GM10248 (cell line): ENCODE measurements at regions of chr10 and their contacts with region 1.

Region 1: DNA sequence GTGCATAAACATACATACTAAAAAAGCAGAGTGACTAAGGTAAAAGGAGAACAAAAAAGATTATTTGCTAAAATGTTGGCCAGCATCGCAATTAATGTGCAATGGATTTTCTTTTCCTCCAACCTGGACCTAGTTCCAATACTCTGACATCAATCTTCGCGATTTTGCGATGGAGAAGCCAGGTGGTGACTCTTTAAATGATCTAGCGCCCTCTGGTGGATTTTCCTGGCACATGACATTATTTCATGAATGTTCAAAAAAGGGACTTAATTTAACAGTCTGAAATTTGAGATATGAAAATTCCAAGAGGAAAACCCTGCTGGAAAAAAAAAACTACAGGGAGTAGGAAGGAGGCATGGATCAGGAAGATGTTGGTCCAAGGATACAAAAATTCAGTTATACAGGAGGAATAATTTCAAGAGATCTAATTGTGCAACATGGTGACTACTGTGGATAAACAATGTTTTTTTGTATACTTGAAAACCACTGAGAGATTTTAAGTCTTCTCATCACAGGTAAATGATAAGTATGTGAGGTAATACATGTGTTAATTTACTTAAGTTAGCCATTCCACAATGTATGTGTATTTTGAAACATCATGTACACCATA is 4.3 kb upstream of the KCNMA1 start:
- DNase-seq: peak; percentile 62
- CTCF ChIP-seq: peak; percentile 66

Region 2: DNA sequence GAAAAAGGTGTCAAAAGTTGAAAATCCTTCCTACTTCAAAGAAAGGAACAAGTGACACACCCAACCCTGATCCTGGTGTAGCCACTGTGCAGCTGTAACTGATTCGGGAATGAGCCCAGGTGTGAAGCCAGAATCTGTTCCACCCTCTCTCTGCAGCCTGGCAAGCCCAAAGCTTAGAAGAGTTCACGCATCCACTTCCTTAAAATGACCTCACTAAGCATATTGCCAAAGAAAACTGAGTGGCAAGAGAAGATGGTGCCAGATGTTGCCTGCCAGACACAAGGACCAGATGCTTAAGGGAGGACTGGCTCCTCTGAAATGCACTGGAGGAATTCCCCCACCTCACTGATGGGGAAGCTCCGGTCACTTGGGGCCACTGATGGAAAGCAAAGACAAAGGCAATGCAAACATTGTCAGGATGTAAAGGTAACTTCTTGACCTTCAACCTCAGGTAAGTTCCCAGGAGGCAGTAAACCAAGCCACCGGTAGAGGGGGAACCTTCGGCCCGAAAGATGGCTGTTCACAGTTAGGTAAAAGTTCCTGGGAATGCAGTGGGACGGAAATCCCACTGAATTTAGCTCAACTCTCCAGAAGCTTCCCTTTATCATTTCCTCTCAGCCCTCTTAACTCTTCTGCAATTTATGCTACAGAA is 559.2 kb before region 1 on chr10:
- CTCF ChIA-PET with region 1: no interaction called
- POLR2A ChIA-PET with region 1: no interaction called
- DNase-seq: no peak
- CTCF ChIP-seq: no peak

Region 3: GRCh38 chr10:77165445-77166208 is 476.3 kb before region 1 on chr10:
- CTCF ChIA-PET with region 1: interaction called, 147 read pairs
- POLR2A ChIA-PET with region 1: no interaction called
- DNase-seq: peak; percentile 27
- CTCF ChIP-seq: peak; percentile 76

Region 4: DNA sequence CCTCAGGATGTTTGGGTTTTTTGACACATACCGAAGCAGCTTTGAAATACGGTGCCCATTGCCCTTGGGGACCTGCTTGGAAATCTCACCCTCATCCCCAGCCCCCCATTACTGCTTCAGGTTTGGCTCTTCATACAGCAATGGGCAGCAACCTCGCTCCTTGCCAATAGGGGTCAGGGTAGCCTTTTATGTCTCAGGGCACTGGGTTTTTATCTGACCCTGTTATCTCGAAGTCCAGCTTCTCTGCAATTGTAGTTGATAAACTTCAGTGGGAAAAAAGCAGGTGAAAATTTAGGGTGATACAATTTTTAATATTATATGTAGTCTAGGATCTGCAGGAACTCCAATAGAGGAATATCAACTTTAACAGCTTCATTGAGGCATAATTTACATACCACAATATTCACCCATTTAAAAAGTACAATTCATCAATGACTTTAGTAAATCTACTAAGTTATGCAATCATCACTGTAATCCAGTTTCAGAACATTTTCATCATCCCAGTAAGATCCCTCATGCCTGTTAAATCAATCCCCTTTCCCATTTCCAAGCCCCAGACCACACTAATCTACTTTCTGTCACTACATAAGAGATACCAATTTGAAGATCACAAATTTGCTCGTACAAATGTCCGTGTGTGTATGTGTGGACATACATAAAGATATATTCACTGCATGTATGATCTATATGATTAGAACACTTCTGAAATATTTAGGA is 390.4 kb before region 1 on chr10:
- CTCF ChIA-PET with region 1: interaction called, 27 read pairs
- POLR2A ChIA-PET with region 1: no interaction called
- DNase-seq: no peak
- CTCF ChIP-seq: peak; percentile 25

Region 5: DNA sequence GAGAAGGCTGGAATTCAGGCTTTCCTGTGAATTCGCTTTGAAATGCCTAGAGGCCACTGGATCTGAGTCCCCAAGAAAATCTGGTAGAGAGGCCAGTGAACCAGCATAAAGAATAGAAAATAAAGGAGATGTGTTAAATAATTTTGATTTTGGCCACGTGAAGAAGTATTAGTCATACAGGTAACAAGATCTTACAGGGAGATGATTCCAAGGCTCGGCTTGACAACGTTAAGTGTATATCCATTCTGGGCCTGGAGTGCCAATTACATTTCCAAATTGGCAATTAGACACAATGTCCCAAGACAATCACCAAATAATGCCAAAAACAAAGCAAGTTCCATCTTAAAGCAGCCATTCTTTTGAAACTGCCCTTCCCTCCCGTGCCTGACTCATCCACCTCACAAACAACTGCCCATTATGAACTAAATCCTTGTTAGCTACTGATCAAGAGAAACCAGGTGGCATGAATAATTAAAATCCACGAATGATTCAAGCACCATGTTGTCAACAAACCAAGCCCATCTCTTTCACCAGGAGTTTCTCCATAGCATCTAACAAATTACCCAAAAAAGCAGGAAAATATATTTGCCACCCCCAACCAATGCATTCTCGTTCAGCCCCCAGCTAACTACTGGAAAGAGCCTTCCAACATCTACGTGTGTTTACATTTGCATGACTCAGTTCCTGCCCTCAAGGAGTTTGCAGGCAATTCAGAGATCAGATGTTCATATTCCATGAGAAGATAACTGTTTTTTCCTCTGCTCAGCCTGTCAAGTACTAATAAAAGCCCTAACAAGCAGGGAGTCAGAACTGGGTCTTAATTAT is 12.8 kb before region 1 on chr10:
- CTCF ChIA-PET with region 1: interaction called, 25 read pairs
- POLR2A ChIA-PET with region 1: no interaction called
- DNase-seq: no peak
- CTCF ChIP-seq: no peak

Region 6: GRCh38 chr10:77661100-77661499 is 19.2 kb after region 1 on chr10:
- CTCF ChIA-PET with region 1: interaction called, 10 read pairs
- POLR2A ChIA-PET with region 1: no interaction called
- DNase-seq: no peak
- CTCF ChIP-seq: no peak